ENCODE measurements at regions of chr5 and their contacts with region 1.

Region 1: GRCh38 chr5:43389679-43390329 is 22.4 kb downstream of the CCL28 start:
- DNase-seq: no peak
- ATAC-seq: peak; percentile 84
- H3K4me3 Mint-ChIP-seq: no peak overlapping the region
- H3K27ac Mint-ChIP-seq: peak overlapping the region; percentile 30
- H3K4me1 Mint-ChIP-seq: peaks cover 16% of the 10 kb centered on the region
- H3K27me3 Mint-ChIP-seq: no peaks in the 10 kb centered on the region
- CTCF ChIP-seq: peak; percentile 64

Region 2: GRCh38 chr5:43227655-43228054 is 162.1 kb before region 1 on chr5:
- CTCF ChIA-PET with region 1: interaction called, 11 read pairs
- POLR2A ChIA-PET with region 1: interaction called, 3 read pairs
- intact Hi-C with region 1: loop called (anchors 1 kb)
- DNase-seq: no peak
- ATAC-seq: no peak
- H3K4me3 Mint-ChIP-seq: no peak overlapping the region
- H3K27ac Mint-ChIP-seq: no peak overlapping the region
- H3K4me1 Mint-ChIP-seq: no peaks in the 10 kb centered on the region
- H3K27me3 Mint-ChIP-seq: no peaks in the 10 kb centered on the region
- CTCF ChIP-seq: no peak

Measured in activated B cell treated with CpG ODN at 0.5 μM for 24 hours (primary cell).